ENCODE measurements at regions of chr13 and their contacts with region 1.

Region 1: GRCh38 chr13:84896128-84896527 is 903.1 kb downstream of the SLITRK6 start:
- DNase-seq: peak in 1 of 2 donors; percentile 3
- ATAC-seq: no peak

Region 2: DNA sequence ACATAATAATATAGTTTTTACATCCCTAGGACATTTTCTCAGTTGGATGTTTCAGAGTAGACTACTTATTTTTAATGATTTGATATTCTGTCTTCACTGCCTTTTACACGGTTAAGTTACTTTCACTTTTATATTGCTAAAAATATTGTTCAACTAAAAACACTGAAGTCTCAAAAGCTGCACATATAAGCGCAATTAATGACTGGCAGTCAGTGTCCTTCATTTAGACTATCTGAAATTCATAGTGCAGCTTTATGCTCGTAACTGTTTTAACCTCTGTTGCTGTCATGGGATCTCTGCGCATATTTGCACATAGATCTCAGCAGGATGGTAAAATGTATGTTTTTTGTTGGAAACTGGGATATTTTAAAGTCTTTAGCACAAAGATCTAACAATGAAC is 38.8 kb after region 1 on chr13:
- intact Hi-C with region 1: no loop called
- DNase-seq: no peak
- ATAC-seq: no peak

Region 3: GRCh38 chr13:85828149-85828548 is 932.0 kb after region 1 on chr13:
- intact Hi-C with region 1: loop called in 1 of 2 experiments (anchors 5 kb)
- DNase-seq: no peak
- ATAC-seq: no peak